ENCODE measurements at regions of chr18 and their contacts with region 1.

Region 1: GRCh38 chr18:10787293-10787901 is 261.6 kb downstream of the NAPG start:
- DNase-seq: peak; percentile 85 to 88 (median 87)
- H3K4me3 ChIP-seq: no peak overlapping the region
- H3K4me3 Mint-ChIP-seq: no peak overlapping the region
- H3K27ac ChIP-seq: no peak overlapping the region
- H3K27ac Mint-ChIP-seq: peak overlapping the region in 2 of 7 donors; percentile 30 to 43
- H3K4me1 ChIP-seq: peaks cover 36 to 50% of the 10 kb centered on the region in 2 donors
- H3K4me1 Mint-ChIP-seq: peaks cover 45% of the 10 kb centered on the region
- H3K27me3 ChIP-seq: no peaks in the 10 kb centered on the region
- H3K27me3 Mint-ChIP-seq: peaks cover 2 to 9% (median 6%) of the 10 kb centered on the region in 3 donors
- CTCF ChIP-seq: peak; percentile 96

Region 2: GRCh38 chr18:10814336-10814735 is 26.9 kb after region 1 on chr18:
- intact Hi-C with region 1: loop called in 1 of 2 experiments (anchors 2 kb)
- DNase-seq: peak in 2 of 3 donors; percentile 7 to 19
- H3K4me3 ChIP-seq: no peak overlapping the region
- H3K4me3 Mint-ChIP-seq: no peak overlapping the region
- H3K27ac ChIP-seq: no peak overlapping the region
- H3K27ac Mint-ChIP-seq: peak overlapping the region in 2 of 7 donors; percentile 4 to 25
- H3K4me1 ChIP-seq: peaks cover 5 to 6% of the 10 kb centered on the region in 2 donors
- H3K4me1 Mint-ChIP-seq: peaks cover 11% of the 10 kb centered on the region
- H3K27me3 ChIP-seq: no peaks in the 10 kb centered on the region
- H3K27me3 Mint-ChIP-seq: peaks cover 0 to 4% (median 0%) of the 10 kb centered on the region in 3 donors
- CTCF ChIP-seq: no peak

Region 3: GRCh38 chr18:11040823-11041656 is 253.6 kb after region 1 on chr18:
- intact Hi-C with region 1: loop called in 1 of 2 experiments (anchors 5 kb)
- DNase-seq: peak; percentile 2 to 33 (median 31)
- H3K4me3 ChIP-seq: no peak overlapping the region
- H3K4me3 Mint-ChIP-seq: no peak overlapping the region
- H3K27ac ChIP-seq: no peak overlapping the region
- H3K27ac Mint-ChIP-seq: no peak overlapping the region
- H3K4me1 ChIP-seq: no peaks in the 10 kb centered on the region
- H3K4me1 Mint-ChIP-seq: no peaks in the 10 kb centered on the region
- H3K27me3 ChIP-seq: no peaks in the 10 kb centered on the region
- H3K27me3 Mint-ChIP-seq: peaks cover 0 to 4% (median 3%) of the 10 kb centered on the region in 3 donors
- CTCF ChIP-seq: peak; percentile 72

Measured in CD14-positive monocyte (primary cell).